ENCODE measurements at regions of chr11 and their contacts with region 1.

Region 1: GRCh38 chr11:64358907-64359711 is at the start of gene RPS6KA4:
- DNase-seq: peak in 1 of 2 donors; percentile 83
- H3K4me3 ChIP-seq: peak within 1 kb of the TSS; percentile 75 to 95
- H3K27ac ChIP-seq: peak within 1 kb of the TSS; percentile 84 to 88
- H3K4me1 ChIP-seq: peaks cover 20 to 32% of the 10 kb centered on the region in 2 donors
- H3K27me3 ChIP-seq: no peaks in the 10 kb centered on the region
- CTCF ChIP-seq: peak in 1 of 3 experiments; percentile 16
- total RNA-seq, gene RPS6KA4: 81.5 TPM

Region 2: GRCh38 chr11:64021757-64022093 is 337.4 kb before region 1 on chr11:
- intact Hi-C with region 1: no loop called
- DNase-seq: no peak
- H3K4me3 ChIP-seq: no peak overlapping the region
- H3K27ac ChIP-seq: no peak overlapping the region
- H3K4me1 ChIP-seq: no peaks in the 10 kb centered on the region
- H3K27me3 ChIP-seq: no peaks in the 10 kb centered on the region
- CTCF ChIP-seq: no peak

Region 3: GRCh38 chr11:64241428-64242153 is 117.5 kb before region 1 on chr11:
- intact Hi-C with region 1: no loop called
- DNase-seq: peak in 1 of 2 donors; percentile 100
- H3K4me3 ChIP-seq: peak overlapping the region; percentile 91 to 97
- H3K27ac ChIP-seq: peak overlapping the region; percentile 96 to 99
- H3K4me1 ChIP-seq: peaks cover 6 to 28% of the 10 kb centered on the region in 2 donors
- H3K27me3 ChIP-seq: no peaks in the 10 kb centered on the region
- CTCF ChIP-seq: peak in 1 of 3 experiments; percentile 29

Region 4: GRCh38 chr11:64317957-64318693 is 41.0 kb before region 1 on chr11 and contains the start of gene PRDX5:
- intact Hi-C with region 1: loop called (anchors 1 kb)
- DNase-seq: peak; percentile 89 to 98
- H3K4me3 ChIP-seq: peak within 1 kb of the TSS; percentile 75 to 93
- H3K27ac ChIP-seq: peak within 1 kb of the TSS; percentile 95 to 99
- H3K4me1 ChIP-seq: peaks cover 7 to 10% of the 10 kb centered on the region in 2 donors
- H3K27me3 ChIP-seq: no peaks in the 10 kb centered on the region
- CTCF ChIP-seq: peak in 2 of 3 experiments; percentile 36 to 47
- total RNA-seq, gene PRDX5: 153 TPM

Region 5: DNA sequence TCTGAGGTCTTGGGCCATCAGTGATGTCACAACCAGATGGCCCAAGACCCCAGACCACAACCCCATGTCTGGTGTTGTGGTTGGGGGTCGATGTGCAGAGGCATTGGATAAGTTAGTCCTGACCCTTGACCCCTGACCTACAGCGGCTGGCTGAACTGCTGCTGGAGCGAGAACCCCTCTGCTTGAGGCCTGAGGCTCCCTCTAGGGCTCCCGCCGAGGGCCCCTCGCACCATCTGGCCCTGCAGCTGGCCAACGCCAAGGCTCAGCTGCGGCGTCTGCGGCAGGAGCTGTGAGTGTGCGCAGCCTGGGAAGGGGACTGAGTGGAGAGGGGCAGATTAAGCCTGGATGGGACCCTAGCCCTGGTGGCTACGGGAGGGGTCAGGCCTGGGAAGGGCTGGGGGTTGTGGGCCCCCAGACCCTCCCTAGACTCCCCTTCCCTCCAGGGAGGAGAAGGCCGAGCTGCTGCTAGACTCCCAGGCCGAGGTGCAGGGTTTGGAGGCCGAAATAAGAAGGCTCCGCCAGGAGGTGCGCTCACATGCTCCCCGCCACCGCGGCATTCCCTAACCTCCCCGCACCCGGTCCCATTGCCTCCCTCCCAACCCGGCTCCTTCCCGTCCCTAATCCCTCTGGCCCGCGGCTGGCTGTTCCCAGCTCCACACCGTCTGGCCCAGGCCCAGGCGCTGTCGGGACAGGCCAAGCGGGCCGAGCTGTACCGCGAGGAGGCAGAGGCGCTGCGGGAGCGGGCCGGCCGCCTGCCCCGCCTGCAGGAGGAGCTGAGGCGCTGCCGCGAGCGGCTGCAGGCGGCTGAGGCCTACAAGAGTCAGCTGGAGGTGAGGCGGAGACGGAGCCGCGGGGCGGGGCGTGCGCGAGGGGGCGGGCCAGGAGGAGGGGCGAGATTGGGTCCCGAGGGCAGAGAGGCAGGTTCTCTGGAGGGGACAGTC is 17.0 kb before region 1 on chr11:
- intact Hi-C with region 1: loop called (anchors 1 kb)
- DNase-seq: peak; percentile 69 to 93
- H3K4me3 ChIP-seq: peak overlapping the region; percentile 39 to 53
- H3K27ac ChIP-seq: peak overlapping the region; percentile 37 to 70
- H3K4me1 ChIP-seq: peaks cover 3 to 6% of the 10 kb centered on the region in 2 donors
- H3K27me3 ChIP-seq: no peaks in the 10 kb centered on the region
- CTCF ChIP-seq: peak; percentile 41 to 71 (median 57)

Region 6: GRCh38 chr11:64428693-64429092 is 69.6 kb after region 1 on chr11:
- intact Hi-C with region 1: no loop called
- DNase-seq: no peak
- H3K4me3 ChIP-seq: no peak overlapping the region
- H3K27ac ChIP-seq: no peak overlapping the region
- H3K4me1 ChIP-seq: no peaks in the 10 kb centered on the region
- H3K27me3 ChIP-seq: no peaks in the 10 kb centered on the region
- CTCF ChIP-seq: no peak

Region 7: GRCh38 chr11:64448599-64449556 is 89.8 kb after region 1 on chr11:
- intact Hi-C with region 1: loop called (anchors 2 kb)
- DNase-seq: peak; percentile 51 to 92
- H3K4me3 ChIP-seq: peak overlapping the region; percentile 39 to 58
- H3K27ac ChIP-seq: peak overlapping the region; percentile 65 to 80
- H3K4me1 ChIP-seq: peaks cover 12 to 16% of the 10 kb centered on the region in 2 donors
- H3K27me3 ChIP-seq: no peaks in the 10 kb centered on the region
- CTCF ChIP-seq: peak; percentile 80 to 91 (median 90)